Left colon (tissue), 2 donors: ENCODE measurements at regions of chr6 and their contacts with region 1.

Region 1: DNA sequence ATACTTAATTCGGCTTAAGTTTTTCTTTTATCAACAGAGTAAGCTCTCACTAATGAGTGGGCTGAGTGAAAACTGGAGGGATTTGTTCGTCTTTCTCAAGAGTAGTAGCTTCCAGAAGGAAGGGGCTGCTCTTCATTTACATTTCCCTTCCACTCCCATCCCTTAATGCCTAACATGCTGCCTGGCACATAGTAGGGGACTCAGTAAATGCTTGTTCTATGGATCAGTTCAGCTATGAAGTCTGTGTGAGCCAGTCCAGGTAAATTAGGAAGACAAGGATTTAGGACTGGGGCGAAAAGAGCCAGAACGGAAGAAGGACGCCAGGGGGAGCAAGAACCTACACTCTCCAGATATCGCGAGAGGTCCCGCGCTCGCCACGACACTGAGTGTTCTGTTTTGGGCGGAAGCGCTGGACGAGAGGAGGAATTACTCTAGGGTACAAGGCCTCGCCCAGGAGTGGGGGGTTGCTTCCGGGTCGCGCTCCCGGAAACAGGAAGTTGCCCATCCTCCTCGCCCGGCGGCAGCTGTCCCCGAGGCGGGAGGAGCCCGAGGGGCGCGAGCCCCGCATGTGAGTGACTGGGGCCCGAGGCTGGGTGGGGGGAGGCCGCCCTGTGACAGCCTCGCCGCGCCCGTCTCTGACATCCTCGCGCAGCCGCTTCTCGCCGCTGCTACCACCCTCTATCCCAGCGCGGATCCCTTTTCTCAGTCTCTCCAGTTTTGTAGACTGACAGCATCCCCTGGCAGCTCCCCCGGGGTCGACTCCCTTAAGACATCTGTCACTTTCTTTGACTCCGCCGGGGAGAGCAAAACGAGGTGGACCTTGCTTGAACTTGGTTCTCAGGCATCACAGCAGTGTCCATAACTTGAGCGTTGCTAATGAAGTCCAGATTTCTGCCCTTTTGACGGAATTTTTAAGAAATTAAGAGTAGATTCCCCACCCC is at the start of gene C6orf89:
- DNase-seq: peak; percentile 98 to 99
- ATAC-seq: peak; percentile 100
- total RNA-seq, gene C6orf89: 53.9 to 59.3 TPM

Region 2: GRCh38 chr6:36985808-36986703 is 100.3 kb after region 1 on chr6 and contains the start of gene MTCH1:
- intact Hi-C with region 1: loop called in 1 of 2 experiments (anchors 10 kb)
- DNase-seq: peak; percentile 89 to 91
- ATAC-seq: peak; percentile 93
- total RNA-seq, gene MTCH1: 142 to 149 TPM

Region 3: DNA sequence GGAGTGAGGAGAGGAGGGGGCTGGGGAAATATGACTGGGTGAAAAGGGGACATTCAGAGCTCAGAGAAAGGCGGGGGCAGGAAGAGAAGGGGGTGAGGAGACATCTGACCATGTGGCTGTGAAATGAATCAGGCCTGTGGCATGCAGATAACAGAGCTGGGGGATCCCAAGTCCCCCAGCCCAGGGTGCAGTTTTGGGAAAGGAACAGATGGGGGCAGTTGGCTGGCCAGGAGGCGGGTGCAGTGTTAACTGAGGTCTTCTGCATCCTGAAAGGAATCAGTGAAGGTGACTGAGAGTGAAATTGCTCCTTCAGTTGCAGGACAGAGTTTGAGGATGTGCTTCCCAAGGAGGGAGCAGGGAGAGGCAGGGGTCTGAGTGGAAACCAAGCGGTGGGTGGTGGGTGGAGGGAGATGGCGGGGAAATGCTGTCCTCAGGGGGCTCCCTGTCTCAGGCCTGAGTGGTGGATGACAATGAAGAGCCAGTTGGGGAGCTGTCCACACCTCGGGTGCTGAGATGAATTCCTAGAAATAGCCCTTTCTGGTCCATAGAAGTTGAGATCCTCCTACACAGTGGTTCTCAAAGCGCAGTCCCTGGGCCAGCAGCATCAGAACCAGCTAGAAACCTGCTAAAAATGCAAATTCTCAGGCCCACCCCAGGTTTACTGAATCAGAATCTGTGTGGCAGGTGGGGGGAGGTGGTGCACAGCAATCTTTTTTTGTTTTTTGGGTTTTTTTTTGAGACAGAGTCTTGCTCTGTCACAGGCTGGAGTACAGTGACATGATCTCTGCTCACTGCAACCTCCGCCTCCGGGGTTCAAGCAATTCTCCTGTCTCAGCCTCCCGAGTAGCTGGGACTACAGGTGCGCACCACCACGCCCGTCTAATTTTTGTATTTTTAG is 640.0 kb after region 1 on chr6:
- intact Hi-C with region 1: no loop called
- DNase-seq: no peak
- ATAC-seq: no peak